Caco-2 (cell line): ENCODE measurements at regions of chr10 and their contacts with region 1.

Region 1: DNA sequence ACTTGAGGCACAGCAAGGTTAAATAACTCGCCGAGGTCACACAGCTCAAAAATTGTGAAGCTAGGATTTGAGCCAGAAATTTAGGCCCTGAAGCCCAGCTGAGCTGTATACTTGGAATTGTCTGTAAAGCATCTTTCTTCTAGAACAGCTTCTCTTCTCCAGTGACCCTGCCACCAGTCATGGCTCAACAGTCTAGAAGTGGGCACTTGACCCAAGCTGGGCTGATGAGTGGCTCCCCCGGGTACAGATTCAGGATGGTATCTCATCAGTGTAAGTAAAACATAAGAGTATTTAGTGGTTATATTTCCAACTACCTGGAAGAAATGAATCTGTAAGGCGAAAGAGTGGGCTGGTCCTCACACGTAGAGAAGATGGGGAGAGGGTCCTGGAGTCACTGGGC is 243.9 kb upstream of the GPR26 start:
- DNase-seq: no peak
- H3K4me3 ChIP-seq: no peak overlapping the region
- H3K4me3 Mint-ChIP-seq: no peak overlapping the region
- H3K27ac Mint-ChIP-seq: no peak overlapping the region
- H3K4me1 ChIP-seq: no peaks in the 10 kb centered on the region
- H3K4me1 Mint-ChIP-seq: no peaks in the 10 kb centered on the region
- H3K27me3 ChIP-seq: no peaks in the 10 kb centered on the region
- H3K27me3 Mint-ChIP-seq: peaks cover 10% of the 10 kb centered on the region
- CTCF ChIP-seq: no peak

Region 2: GRCh38 chr10:123559066-123559822 is 137.0 kb after region 1 on chr10:
- CTCF ChIA-PET with region 1: no interaction called
- POLR2A ChIA-PET with region 1: no interaction called
- intact Hi-C with region 1: loop called (anchors 2 kb)
- DNase-seq: peak; percentile 63 to 75
- H3K4me3 ChIP-seq: no peak overlapping the region
- H3K4me3 Mint-ChIP-seq: no peak overlapping the region
- H3K27ac Mint-ChIP-seq: no peak overlapping the region
- H3K4me1 ChIP-seq: no peaks in the 10 kb centered on the region
- H3K4me1 Mint-ChIP-seq: no peaks in the 10 kb centered on the region
- H3K27me3 ChIP-seq: no peaks in the 10 kb centered on the region
- H3K27me3 Mint-ChIP-seq: peaks cover 13% of the 10 kb centered on the region
- CTCF ChIP-seq: peak; percentile 93 to 96